A673 (cell line): ENCODE measurements at regions of chr1 and their contacts with region 1.

Region 1: GRCh38 chr1:116984406-116985160 is 17.0 kb upstream of the CD101 start:
- DNase-seq: no peak
- H3K4me3 ChIP-seq: no peak overlapping the region
- H3K27ac ChIP-seq: no peak overlapping the region
- H3K4me1 ChIP-seq: no peaks in the 10 kb centered on the region
- H3K27me3 ChIP-seq: no peaks in the 10 kb centered on the region
- CTCF ChIP-seq: no peak

Region 2: GRCh38 chr1:116679091-116679827 is 305.3 kb before region 1 on chr1:
- CTCF ChIA-PET with region 1: no interaction called
- POLR2A ChIA-PET with region 1: no interaction called
- intact Hi-C with region 1: no loop called
- DNase-seq: no peak
- H3K4me3 ChIP-seq: no peak overlapping the region
- H3K27ac ChIP-seq: no peak overlapping the region
- H3K4me1 ChIP-seq: no peaks in the 10 kb centered on the region
- H3K27me3 ChIP-seq: no peaks in the 10 kb centered on the region
- CTCF ChIP-seq: no peak

Region 3: GRCh38 chr1:116764466-116764898 is 220.1 kb before region 1 on chr1:
- CTCF ChIA-PET with region 1: no interaction called
- POLR2A ChIA-PET with region 1: interaction called, 20 read pairs
- intact Hi-C with region 1: no loop called
- DNase-seq: no peak
- H3K4me3 ChIP-seq: no peak overlapping the region
- H3K27ac ChIP-seq: no peak overlapping the region
- H3K4me1 ChIP-seq: no peaks in the 10 kb centered on the region
- H3K27me3 ChIP-seq: no peaks in the 10 kb centered on the region
- CTCF ChIP-seq: no peak; the same call in 1 of the 2 replicates